Prostate gland (tissue), 2 donors: ENCODE measurements at regions of chr13 and their contacts with region 1.

Region 1: DNA sequence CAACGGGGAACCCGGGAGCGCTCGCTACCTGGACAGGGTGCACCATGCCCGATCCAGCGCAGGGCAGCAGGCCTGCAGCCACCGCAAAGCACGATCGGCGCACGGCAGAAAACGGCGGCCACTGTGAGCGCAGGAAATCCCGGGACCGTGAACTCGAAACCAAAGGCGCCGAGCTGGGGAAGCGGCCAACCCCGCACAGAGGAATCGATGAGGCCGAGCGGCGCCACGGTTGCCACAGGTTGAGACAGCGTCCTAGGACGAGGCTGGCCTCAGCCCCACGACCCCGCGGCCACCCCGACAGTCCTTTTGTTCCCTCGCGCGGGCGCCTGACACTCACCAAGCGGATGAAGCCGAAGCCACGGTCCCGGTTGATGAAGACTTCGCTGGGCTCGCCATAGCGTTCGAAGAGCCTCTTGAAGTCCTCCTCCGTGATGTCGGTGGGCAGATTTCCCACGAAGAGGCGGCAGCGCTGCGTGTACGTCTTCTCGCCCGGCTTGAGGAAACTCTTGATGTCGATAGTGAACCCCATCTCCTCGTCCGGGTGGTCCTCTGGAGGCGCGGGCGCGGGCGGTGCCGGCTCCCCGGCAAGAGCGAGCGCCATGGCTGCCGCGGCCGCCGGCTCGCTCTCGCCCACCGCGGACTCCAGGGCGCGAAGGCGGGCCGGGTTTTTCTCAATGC is 557 bp downstream of the PSPC1 start:
- DNase-seq: peak; percentile 34
- H3K4me3 ChIP-seq: peak overlapping the region; percentile 62 to 69
- H3K27ac ChIP-seq: peak overlapping the region; percentile 89 to 90
- H3K4me1 ChIP-seq: no peaks in the 10 kb centered on the region
- H3K27me3 ChIP-seq: no peaks in the 10 kb centered on the region
- CTCF ChIP-seq: no peak
- POLR2A ChIP-seq: no peak

Region 2: GRCh38 chr13:19633479-19634255 is 148.5 kb before region 1 on chr13 and contains the start of gene MPHOSPH8:
- intact Hi-C with region 1: loop called (anchors 2 kb)
- DNase-seq: peak; percentile 96
- H3K4me3 ChIP-seq: peak within 1 kb of the TSS; percentile 65 to 83
- H3K27ac ChIP-seq: peak within 1 kb of the TSS; percentile 94
- H3K4me1 ChIP-seq: peaks cover 9% of the 10 kb centered on the region
- H3K27me3 ChIP-seq: no peaks in the 10 kb centered on the region
- CTCF ChIP-seq: peak in 1 of 4 experiments; percentile 21
- POLR2A ChIP-seq: peak; percentile 92
- total RNA-seq, gene MPHOSPH8: 24.3 to 30.5 TPM

Region 3: DNA sequence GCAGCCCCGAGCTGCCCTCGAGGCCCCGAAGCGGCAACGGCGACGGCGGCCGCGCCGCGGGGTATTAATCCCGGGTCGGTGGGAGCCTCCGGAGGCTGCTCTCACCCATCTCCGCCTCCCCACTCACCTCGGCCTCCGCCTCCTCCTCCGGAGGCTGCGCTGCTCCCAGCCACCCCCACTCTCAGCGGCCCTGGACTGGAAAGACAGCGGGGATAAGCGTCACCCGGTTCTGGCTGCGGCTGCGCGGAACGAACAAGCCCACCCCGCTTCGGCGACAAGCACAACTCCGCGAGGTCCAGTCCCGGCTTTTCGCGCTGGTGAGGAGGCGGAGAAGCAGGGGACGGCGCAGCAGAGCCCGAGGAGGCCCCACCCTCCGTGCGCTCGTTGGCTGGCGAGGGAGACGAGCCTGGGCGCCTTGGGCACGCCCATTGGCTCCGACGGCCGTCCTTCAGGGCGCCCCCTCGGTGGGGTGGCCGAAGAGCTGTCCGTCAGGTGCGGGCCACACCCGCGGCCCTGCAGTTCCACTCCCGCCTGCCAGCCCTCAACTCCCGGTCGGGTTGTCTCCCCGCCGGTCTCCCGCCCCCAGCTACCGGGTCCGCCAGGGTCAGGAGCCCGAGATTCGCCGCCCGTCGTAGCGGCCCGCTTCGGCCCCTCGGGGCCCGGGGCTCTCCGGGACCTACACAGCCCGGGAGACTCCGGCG is 81.3 kb after region 1 on chr13 and contains the start of gene ZMYM5:
- intact Hi-C with region 1: loop called (anchors 5 kb)
- DNase-seq: peak; percentile 99
- H3K4me3 ChIP-seq: peak within 1 kb of the TSS; percentile 86 to 90
- H3K27ac ChIP-seq: peak within 1 kb of the TSS; percentile 97 to 99
- H3K4me1 ChIP-seq: no peaks in the 10 kb centered on the region
- H3K27me3 ChIP-seq: no peaks in the 10 kb centered on the region
- CTCF ChIP-seq: peak in 3 of 4 experiments; percentile 16 to 48 (median 31)
- POLR2A ChIP-seq: peak; percentile 94
- total RNA-seq, gene ZMYM5: 19.6 to 21.5 TPM

Region 4: DNA sequence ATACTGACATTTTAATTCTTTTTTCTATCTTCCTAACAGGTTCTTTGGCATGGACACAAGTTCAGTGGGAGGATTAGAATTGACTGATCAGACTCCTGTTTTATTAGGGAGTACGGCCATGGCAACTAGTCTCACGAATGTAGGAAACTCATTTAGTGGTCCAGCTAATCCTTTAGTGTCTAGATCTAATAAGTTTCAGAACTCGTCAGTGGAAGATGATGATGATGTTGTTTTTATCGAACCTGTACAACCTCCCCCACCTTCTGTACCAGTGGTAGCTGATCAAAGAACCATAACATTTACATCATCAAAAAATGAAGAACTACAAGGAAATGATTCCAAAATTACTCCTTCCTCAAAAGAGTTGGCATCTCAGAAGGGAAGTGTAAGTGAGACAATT is 210.8 kb after region 1 on chr13:
- intact Hi-C with region 1: no loop called
- DNase-seq: no peak
- H3K4me3 ChIP-seq: no peak overlapping the region
- H3K27ac ChIP-seq: no peak overlapping the region
- H3K4me1 ChIP-seq: no peaks in the 10 kb centered on the region
- H3K27me3 ChIP-seq: no peaks in the 10 kb centered on the region
- CTCF ChIP-seq: no peak
- POLR2A ChIP-seq: no peak